Sciatic nerve (tissue), 2 donors: ENCODE measurements at regions of chr3 and their contacts with region 1.

Region 1: DNA sequence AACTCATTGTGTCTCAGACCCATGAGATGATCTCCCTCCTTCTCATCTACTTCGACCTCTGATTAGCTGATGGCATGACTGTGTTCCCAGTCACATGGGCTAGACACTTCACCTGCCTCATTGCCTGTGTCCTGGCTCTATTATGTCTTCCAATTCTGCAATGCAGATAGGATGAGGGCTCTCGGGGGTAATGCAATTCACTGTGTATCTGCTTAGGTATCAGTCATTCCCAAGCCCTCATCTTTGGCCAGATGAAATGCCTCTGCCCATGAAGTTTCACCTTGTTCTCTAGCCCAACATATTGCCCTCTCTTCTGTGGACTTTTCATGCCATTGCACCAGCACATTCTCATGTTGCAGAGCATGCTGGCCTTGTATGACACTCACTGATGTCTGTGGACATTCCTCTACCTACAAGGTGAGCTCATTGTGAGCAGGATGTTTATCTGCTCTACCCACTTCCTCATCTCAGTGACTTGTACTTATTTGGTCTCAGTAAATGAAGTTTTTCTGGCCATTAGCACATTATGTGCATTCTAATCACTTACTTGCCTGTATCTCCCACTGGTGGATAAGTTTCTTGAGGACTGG is 32.3 kb downstream of the MOBP start:
- DNase-seq: no peak
- ATAC-seq: no peak

Region 2: DNA sequence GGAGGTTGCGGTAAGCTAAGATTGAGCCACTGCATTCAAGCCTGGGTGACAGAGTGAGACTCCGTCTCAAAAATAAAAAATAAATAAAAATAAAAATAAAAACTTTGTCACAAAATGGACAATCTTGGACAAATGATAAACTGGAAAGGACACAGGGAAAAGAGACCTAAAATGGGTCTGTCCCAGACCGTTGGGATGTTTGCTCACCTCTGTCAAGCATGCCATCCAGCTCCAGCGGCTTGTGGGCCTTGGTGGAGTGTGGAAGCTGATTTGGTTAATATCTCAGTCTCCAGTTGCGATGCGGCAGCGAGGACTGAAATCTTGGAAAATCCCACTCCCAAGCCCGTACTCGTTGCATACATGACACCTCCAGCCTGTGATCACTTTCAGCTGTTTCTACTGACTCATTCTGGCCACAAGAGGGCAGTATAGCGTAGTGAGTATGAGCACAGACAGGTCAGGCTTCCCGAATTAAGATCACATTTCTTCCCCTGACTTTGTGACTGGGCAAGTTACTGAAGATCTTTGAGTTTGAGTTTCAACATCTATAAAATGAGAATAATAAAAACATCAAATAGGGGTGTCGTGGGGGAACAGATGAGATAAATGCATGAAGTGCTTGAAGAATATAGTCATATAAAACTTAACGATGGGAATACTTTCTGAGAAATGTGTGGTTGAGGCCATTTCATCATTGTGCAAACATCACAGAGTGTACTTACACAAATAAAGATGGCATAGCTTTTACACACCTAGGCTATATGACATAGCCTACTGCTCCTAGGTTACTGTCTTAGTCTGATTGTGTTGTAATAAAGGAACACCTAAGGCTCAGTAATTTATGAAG is 51.9 kb before region 1 on chr3:
- intact Hi-C with region 1: loop called (anchors 5 kb)
- DNase-seq: peak; percentile 70
- ATAC-seq: peak; percentile 93